Activated CD4-positive, alpha-beta T cell treated with anti-CD3 and anti-CD28 coated beads for 36 hours (primary cell): ENCODE measurements at regions of chr14 and their contacts with region 1.

Region 1: GRCh38 chr14:23567192-23568020 is at the start of gene AP1G2:
- DNase-seq: peak; percentile 95
- ATAC-seq: peak; percentile 96
- H3K4me3 Mint-ChIP-seq: peak within 1 kb of the TSS; percentile 92
- H3K27ac Mint-ChIP-seq: peak within 1 kb of the TSS; percentile 95
- H3K4me1 Mint-ChIP-seq: peaks cover 23% of the 10 kb centered on the region
- H3K27me3 Mint-ChIP-seq: peaks cover 5% of the 10 kb centered on the region
- total RNA-seq, gene AP1G2: 162 to 166 TPM

Region 2: GRCh38 chr14:23327947-23328744 is 239.3 kb before region 1 on chr14:
- CTCF ChIA-PET with region 1: interaction called, 3 read pairs
- POLR2A ChIA-PET with region 1: no interaction called
- intact Hi-C with region 1: loop called in 1 of 2 experiments (anchors 1 kb)
- DNase-seq: peak; percentile 82
- ATAC-seq: peak; percentile 92
- H3K4me3 Mint-ChIP-seq: no peak overlapping the region
- H3K27ac Mint-ChIP-seq: no peak overlapping the region
- H3K4me1 Mint-ChIP-seq: peaks cover 6% of the 10 kb centered on the region
- H3K27me3 Mint-ChIP-seq: no peaks in the 10 kb centered on the region

Region 3: GRCh38 chr14:23478111-23478759 is 89.2 kb before region 1 on chr14:
- CTCF ChIA-PET with region 1: interaction called, 17 read pairs
- POLR2A ChIA-PET with region 1: no interaction called
- intact Hi-C with region 1: loop called (anchors 1 kb)
- DNase-seq: peak; percentile 79
- ATAC-seq: peak; percentile 63
- H3K4me3 Mint-ChIP-seq: no peak overlapping the region
- H3K27ac Mint-ChIP-seq: no peak overlapping the region
- H3K4me1 Mint-ChIP-seq: peaks cover 11% of the 10 kb centered on the region
- H3K27me3 Mint-ChIP-seq: no peaks in the 10 kb centered on the region

Region 4: DNA sequence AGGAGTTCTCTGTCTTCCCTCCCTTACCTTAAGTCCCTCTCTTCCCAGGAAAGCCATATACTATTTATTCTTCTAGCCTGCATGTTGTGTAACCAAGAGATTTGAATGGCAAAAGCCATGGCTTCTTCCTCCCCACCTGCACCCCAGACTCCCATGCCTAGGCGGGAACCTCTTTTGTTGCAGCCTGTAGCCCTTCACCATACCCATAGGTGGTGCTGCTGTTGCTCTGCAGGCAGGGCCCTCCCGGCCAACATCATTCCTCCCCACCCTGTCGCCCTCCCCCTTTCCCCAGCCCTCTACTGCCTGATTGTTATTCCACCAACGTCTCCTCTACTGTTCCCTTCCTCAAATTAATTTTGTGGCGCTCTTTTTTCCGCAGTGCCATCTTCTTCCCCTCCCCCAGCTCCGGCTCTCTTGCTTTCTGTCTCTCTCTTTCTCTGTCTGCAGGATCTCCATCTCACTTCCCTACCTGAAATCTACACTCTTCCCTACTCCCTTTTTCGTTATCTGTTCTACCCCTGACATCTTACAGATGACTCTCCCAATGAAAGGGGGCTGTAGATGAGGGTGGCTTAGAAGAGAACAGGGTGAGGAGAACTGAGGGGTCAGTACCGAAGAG is 84.1 kb before region 1 on chr14:
- CTCF ChIA-PET with region 1: interaction called, 17 read pairs
- POLR2A ChIA-PET with region 1: no interaction called
- intact Hi-C with region 1: loop called (anchors 1 kb)
- DNase-seq: peak; percentile 41
- ATAC-seq: peak; percentile 72
- H3K4me3 Mint-ChIP-seq: no peak overlapping the region
- H3K27ac Mint-ChIP-seq: no peak overlapping the region
- H3K4me1 Mint-ChIP-seq: peaks cover 1% of the 10 kb centered on the region
- H3K27me3 Mint-ChIP-seq: no peaks in the 10 kb centered on the region

Region 5: DNA sequence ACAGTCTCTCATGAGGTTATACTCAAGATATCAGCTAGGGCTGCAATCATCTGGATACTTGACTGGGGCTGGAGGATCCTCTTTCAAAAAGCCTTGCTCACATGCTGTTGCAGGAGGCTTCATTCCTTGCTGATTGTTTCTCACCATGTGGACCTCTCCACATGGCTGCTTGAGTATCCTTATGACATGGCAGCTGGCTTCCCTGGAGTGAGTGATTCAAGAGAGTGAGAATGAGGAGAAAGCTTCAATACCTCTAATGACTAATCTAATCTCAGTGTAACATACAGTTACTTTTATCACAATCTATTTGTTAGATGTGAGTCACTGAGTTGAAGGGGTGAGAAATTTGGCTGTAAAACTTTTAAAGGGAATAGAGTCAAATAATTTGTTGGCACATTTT is 889.6 kb after region 1 on chr14:
- CTCF ChIA-PET with region 1: no interaction called
- POLR2A ChIA-PET with region 1: no interaction called
- intact Hi-C with region 1: no loop called
- DNase-seq: peak; percentile 16
- ATAC-seq: peak; percentile 80
- H3K4me3 Mint-ChIP-seq: no peak overlapping the region
- H3K27ac Mint-ChIP-seq: no peak overlapping the region
- H3K4me1 Mint-ChIP-seq: peaks cover 4% of the 10 kb centered on the region
- H3K27me3 Mint-ChIP-seq: no peaks in the 10 kb centered on the region